ENCODE measurements at regions of chr1 and their contacts with region 1.

Region 1: DNA sequence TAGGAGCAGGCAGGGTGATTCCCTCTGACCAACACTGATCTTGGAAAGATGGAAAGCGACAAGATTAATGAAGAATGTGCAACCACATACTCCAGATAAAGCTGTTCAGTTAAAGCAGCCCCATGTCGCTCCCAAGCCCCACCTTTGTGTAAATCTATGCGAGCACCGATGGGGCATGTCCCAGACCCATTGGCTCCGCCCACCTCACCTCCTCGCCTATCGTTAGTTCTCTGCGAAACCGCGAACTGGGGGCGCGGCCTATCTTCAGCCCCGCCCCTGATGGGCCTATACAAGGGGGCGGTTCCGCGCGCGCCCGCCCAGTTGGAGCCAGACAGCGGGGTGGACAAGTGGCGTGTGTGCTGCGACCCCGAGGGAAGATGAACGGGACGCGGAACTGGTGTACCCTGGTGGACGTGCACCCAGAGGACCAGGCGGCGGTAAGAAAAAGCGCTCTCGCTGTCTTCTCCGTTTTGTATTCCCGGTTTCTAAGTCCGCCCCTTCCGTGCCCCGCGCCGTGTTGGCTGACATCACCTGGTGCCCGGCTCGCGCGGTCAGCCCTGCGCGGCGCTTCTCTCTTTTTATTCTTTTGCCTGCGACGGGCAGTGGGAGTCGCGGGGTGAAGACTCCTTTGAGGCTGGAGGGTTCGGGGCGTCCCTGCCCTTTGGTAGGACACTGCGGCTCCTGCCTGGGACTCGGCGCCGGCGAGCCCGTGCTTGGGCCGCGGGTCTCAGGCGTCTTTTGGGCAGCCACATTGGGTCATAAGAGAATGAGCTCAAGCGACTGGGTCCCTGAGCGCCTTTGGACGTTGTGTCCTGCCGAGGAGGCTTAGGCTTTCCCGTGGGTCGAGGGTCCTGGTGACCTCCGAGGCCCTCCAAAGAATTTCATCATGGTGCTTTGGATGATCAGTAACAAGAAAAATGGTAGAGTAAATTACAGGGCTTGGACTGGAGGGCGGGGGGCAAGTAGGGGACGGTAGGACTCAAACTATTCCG is at the start of gene TUFT1:
- DNase-seq: peak; percentile 91
- H3K4me3 Mint-ChIP-seq: peak within 1 kb of the TSS; percentile 91
- H3K27ac Mint-ChIP-seq: peak within 1 kb of the TSS; percentile 62
- H3K4me1 Mint-ChIP-seq: peaks cover 16% of the 10 kb centered on the region
- H3K27me3 Mint-ChIP-seq: peaks cover 10% of the 10 kb centered on the region
- total RNA-seq, gene TUFT1: 1.9 and 2.3 TPM in 2 replicates

Region 2: GRCh38 chr1:151346769-151347522 is 193.3 kb before region 1 on chr1 and contains the start of gene RFX5:
- intact Hi-C with region 1: loop called (anchors 5 kb)
- DNase-seq: peak; percentile 95
- H3K4me3 Mint-ChIP-seq: peak within 1 kb of the TSS; percentile 95
- H3K27ac Mint-ChIP-seq: peak within 1 kb of the TSS; percentile 99
- H3K4me1 Mint-ChIP-seq: peaks cover 45% of the 10 kb centered on the region
- H3K27me3 Mint-ChIP-seq: no peaks in the 10 kb centered on the region
- total RNA-seq, gene RFX5: 78.1 and 83.4 TPM in 2 replicates

Region 3: DNA sequence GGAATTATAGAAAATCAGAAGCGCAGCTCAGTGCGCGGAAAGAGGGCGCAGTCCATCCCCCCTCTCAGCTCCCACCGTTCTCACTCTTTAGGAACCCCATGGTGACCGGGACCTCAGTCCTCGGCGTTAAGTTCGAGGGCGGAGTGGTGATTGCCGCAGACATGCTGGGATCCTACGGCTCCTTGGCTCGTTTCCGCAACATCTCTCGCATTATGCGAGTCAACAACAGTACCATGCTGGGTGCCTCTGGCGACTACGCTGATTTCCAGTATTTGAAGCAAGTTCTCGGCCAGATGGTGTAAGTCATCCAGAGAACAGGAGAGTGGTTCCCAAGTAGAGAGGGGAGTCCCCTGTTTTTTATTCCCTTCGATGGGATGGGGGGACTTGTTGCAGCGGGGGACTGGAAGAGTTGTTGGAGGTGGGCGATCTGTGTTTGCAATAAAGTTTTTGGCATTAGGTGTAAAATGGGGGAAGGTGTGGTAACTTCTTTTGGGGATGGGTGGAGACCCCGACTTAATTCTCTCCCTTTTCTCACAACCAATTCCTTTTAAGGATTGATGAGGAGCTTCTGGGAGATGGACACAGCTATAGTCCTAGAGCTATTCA is 140.3 kb before region 1 on chr1:
- intact Hi-C with region 1: loop called (anchors 1 kb)
- DNase-seq: no peak
- H3K4me3 Mint-ChIP-seq: peak overlapping the region; percentile 92
- H3K27ac Mint-ChIP-seq: peak overlapping the region; percentile 99
- H3K4me1 Mint-ChIP-seq: peaks cover 27% of the 10 kb centered on the region
- H3K27me3 Mint-ChIP-seq: peaks cover 3% of the 10 kb centered on the region

Region 4: DNA sequence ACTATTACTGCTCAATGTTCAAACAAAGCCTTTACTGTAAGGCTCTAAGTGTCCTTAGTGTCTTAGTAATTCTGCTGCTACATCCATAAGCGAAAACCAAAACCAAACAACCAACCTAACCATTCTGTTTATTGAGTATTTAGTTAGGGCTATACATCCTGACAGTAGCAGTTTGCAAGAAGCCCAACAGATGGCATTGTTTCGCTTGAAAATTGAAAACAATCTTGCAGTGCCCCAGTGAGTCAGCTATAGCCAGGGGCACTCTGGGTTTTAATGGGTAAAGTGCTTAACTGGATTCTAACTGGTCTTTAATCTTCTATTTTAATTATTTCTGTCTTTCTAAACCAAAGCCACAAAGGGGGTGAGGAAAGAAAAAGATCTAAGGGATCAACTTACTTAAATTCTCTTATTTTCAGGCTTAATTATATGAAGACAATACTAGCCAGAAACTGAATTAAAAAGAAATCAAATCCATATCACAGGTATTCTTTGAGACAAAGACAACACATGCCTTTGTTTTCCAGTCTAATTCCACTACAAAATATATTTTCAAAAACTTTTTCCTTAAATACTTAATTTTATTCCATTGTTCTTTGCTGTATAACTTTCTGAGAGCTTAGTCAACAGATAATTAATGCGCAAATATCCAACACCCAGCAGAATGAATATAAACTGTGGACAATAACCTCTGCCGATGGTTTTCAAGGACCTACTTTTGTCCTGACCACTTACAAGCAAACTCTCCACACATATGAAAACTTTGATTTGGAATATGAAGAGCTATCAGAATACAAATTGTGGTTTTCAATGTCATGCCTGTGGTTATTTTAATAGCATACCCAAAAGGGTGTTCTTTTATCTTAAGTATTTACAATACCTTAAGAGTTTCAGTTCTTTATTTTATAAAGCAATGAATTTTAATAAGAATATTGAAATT is 96.2 kb before region 1 on chr1:
- intact Hi-C with region 1: loop called (anchors 1 kb)
- DNase-seq: peak; percentile 50
- H3K4me3 Mint-ChIP-seq: no peak overlapping the region
- H3K27ac Mint-ChIP-seq: no peak overlapping the region
- H3K4me1 Mint-ChIP-seq: peaks cover 36% of the 10 kb centered on the region
- H3K27me3 Mint-ChIP-seq: no peaks in the 10 kb centered on the region

Region 5: DNA sequence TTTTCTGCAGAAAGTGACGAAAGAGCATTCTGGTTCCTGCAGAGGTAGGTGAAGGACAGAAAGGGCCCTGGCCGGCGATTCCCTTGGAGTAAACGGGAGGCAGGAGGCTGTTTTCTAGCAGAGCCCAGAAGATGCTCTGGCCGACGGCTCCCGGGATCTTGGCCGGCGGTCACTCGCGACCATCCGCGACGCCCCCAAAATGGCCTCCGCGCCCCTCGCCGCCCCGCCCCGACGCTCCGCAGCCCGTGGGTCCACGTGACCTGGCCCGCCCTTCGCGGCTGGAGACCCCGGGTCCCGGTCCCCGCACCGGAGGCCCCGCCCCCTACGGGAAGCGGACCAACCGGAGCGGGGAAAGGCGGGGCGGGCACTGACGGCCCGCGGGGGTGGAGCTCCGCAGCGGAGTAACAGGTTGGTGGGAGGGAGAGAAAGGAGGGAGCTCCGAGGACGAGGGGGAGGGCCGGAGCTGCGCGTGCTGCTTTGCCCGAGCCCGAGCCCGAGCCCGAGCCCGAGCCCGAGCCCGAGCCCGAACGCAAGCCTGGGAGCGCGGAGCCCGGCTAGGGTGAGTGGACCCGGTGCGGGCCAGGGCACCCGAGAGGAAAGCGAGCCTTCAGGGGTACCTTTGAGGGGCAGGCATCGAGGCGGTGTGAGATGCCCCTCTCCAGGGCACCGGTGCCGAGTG is 29.2 kb before region 1 on chr1 and contains the start of gene CGN:
- intact Hi-C with region 1: loop called (anchors 1 kb)
- DNase-seq: peak; percentile 85
- H3K4me3 Mint-ChIP-seq: peak within 1 kb of the TSS; percentile 85
- H3K27ac Mint-ChIP-seq: peak within 1 kb of the TSS; percentile 47
- H3K4me1 Mint-ChIP-seq: peaks cover 32% of the 10 kb centered on the region
- H3K27me3 Mint-ChIP-seq: peaks cover 21% of the 10 kb centered on the region
- total RNA-seq, gene CGN: 0.17 and 0.91 TPM in 2 replicates

Region 6: DNA sequence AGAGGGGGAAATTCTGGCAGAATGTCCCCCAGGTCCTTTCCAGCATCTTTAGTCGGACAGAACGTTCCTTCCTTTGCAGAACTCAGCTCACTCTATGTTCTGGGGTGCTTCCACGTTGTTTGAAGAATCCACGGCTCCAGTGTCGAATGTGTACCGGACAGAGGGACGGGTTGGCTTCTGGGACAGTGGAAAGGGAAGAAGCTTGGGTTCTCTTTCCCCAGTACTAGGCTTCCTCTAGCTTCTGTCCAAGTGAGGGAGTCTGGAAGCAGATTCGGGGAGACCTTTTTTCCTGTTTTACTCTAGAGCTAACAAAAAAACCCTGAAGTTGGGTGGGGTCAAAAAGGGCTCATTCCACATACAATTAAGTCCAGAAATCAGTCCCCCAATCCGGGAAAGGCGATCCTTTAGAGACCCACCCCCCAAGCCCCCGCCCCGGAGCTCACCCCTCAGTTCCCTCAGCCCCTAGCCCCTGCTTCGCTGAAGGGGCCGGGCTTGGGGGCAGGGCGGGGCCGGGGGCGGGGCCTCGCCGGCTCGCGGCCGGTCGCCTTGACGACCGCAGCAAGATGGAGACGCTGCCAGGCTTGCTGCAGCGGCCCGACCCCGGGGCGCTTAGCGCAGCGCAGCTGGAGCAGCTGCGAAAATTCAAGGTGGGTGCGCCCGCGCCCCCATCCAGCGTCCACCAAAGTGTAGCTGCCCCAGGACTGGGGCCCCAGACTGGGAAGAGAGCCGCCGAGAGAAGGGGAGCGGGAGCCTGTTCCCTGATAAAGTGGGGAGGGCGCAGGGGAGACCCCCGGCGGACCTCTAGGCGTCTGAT is 180.9 kb after region 1 on chr1 and contains the start of gene RIIAD1:
- intact Hi-C with region 1: loop called (anchors 1 kb)
- DNase-seq: peak; percentile 36
- H3K4me3 Mint-ChIP-seq: peak within 1 kb of the TSS; percentile 77
- H3K27ac Mint-ChIP-seq: no peak within 1 kb of the TSS
- H3K4me1 Mint-ChIP-seq: peaks cover 18% of the 10 kb centered on the region
- H3K27me3 Mint-ChIP-seq: peaks cover 76% of the 10 kb centered on the region
- total RNA-seq, gene RIIAD1: not detected in 2 replicates